Heart left ventricle (tissue), 16 donors: ENCODE measurements at regions of chr5 and their contacts with region 1.

Region 1: GRCh38 chr5:140557136-140557805 is at the start of gene SRA1:
- DNase-seq: peak; percentile 93 to 97 (median 94)
- ATAC-seq: peak; percentile 91 to 98 (median 96)
- H3K4me3 ChIP-seq: peak within 1 kb of the TSS; percentile 56 to 99 (median 78)
- H3K27ac ChIP-seq: peak within 1 kb of the TSS; percentile 58 to 97 (median 90)
- H3K4me1 ChIP-seq: peaks cover 0 to 50% (median 32%) of the 10 kb centered on the region in 12 donors
- H3K27me3 ChIP-seq: no peaks in the 10 kb centered on the region
- CTCF ChIP-seq: peak in 1 of 12 donors; percentile 5
- POLR2A ChIP-seq: peak; percentile 53 to 90
- total RNA-seq, gene SRA1: 22.4 to 38.1 (median 28.1) TPM

Region 2: GRCh38 chr5:140391312-140391711 is 166.0 kb before region 1 on chr5:
- intact Hi-C with region 1: no loop called
- DNase-seq: no peak
- ATAC-seq: no peak
- H3K4me3 ChIP-seq: no peak overlapping the region
- H3K27ac ChIP-seq: no peak overlapping the region
- H3K4me1 ChIP-seq: no peaks in the 10 kb centered on the region
- H3K27me3 ChIP-seq: no peaks in the 10 kb centered on the region
- CTCF ChIP-seq: no peak
- POLR2A ChIP-seq: no peak

Region 3: DNA sequence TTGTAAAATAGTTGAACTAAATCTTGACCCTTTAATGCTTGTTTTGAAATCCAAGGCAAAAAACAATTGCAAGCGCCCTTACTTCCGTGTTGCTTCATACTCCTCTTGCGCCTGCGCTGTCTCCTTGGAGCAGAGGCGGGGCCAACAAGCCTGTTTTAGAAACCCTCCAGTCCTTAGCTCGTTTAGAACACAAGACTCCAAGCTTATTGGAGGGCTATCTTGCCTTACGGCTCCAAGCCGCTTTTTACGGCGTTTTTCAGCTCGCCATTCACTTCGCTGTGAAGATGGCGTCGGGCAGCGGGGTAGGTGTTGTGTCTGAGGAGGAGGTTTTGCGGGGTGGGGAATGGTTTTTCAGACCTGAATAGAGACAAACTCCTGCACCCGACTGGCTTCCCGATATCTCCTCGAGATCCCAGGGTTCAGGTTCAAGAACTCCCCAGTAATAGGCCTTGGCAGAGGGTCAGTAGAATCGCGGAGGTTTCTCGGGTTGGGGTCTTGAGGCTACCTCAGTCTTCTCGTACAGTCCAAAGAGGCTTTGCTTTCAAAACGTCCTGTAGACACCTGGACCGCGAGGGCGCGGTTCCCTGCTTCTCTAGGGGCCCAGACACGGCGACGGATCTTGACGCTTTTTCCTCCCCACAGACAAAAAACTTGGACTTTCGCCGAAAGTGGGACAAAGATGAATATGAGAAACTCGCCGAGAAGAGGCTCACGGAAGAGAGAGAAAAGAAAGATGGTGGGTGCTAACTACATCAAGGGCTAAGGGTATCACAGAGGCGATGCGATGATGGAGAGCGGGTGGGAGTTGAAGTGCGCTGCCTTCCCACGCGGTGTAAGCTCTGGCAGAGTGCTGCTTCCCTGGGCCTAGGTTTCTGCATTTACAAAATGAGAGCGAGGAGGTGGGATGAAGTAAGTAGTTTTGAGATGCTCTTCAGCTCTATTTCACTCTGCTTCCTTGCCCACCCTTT is 143.2 kb after region 1 on chr5 and contains the start of gene ZMAT2:
- intact Hi-C with region 1: loop called in 2 of 10 experiments (anchors 5 to 10 kb)
- DNase-seq: peak; percentile 94 to 96 (median 95)
- ATAC-seq: peak; percentile 98 to 100 (median 99)
- H3K4me3 ChIP-seq: peak within 1 kb of the TSS; percentile 49 to 97 (median 83)
- H3K27ac ChIP-seq: peak within 1 kb of the TSS in 11 of 12 donors; percentile 47 to 74 (median 64)
- H3K4me1 ChIP-seq: peaks cover 0 to 19% (median 14%) of the 10 kb centered on the region in 12 donors
- H3K27me3 ChIP-seq: no peaks in the 10 kb centered on the region
- CTCF ChIP-seq: no peak
- POLR2A ChIP-seq: peak in 1 of 2 donors; percentile 79
- total RNA-seq, gene ZMAT2: 25.0 to 39.5 (median 33.9) TPM